Right cardiac atrium (tissue), 5 donors: ENCODE measurements at regions of chr2 and their contacts with region 1.

Region 1: GRCh38 chr2:209977386-209978239 is 24.8 kb upstream of the RPE start:
- DNase-seq: no peak
- ATAC-seq: no peak
- H3K4me3 ChIP-seq: no peak overlapping the region
- H3K27ac ChIP-seq: no peak overlapping the region
- H3K4me1 ChIP-seq: no peaks in the 10 kb centered on the region
- H3K27me3 ChIP-seq: peaks cover 3% of the 10 kb centered on the region

Region 2: DNA sequence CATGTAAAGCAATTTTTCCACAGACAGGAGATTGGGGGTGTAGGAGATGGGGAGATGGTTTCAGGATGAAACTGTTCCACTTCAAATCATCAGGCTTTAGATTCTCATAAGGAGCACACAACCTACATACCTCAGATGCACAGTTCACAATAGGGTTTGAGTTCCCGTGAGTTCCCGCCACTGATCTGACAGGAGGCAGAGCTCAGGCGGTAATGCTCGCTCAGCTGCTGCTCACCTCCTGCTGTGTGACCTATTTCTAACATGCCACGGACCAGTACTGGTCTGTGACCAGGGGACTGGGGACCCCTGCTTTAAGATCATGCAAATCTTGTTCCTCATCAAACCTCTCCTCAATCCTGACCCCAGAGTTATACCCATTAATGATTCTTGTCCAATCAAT is 94.9 kb after region 1 on chr2:
- intact Hi-C with region 1: no loop called
- DNase-seq: peak in 1 of 3 donors; percentile 31
- ATAC-seq: no peak
- H3K4me3 ChIP-seq: no peak overlapping the region
- H3K27ac ChIP-seq: no peak overlapping the region
- H3K4me1 ChIP-seq: no peaks in the 10 kb centered on the region
- H3K27me3 ChIP-seq: no peaks in the 10 kb centered on the region

Region 3: GRCh38 chr2:210195101-210195852 is 217.7 kb after region 1 on chr2:
- intact Hi-C with region 1: loop called (anchors 2 to 5 kb)
- DNase-seq: no peak
- ATAC-seq: no peak
- H3K4me3 ChIP-seq: peak overlapping the region; percentile 52
- H3K27ac ChIP-seq: no peak overlapping the region
- H3K4me1 ChIP-seq: no peaks in the 10 kb centered on the region
- H3K27me3 ChIP-seq: no peaks in the 10 kb centered on the region

Region 4: GRCh38 chr2:210203157-210203947 is 225.7 kb after region 1 on chr2:
- intact Hi-C with region 1: loop called in 3 of 4 experiments (anchors 2 to 5 kb)
- DNase-seq: no peak
- ATAC-seq: no peak
- H3K4me3 ChIP-seq: no peak overlapping the region
- H3K27ac ChIP-seq: no peak overlapping the region
- H3K4me1 ChIP-seq: no peaks in the 10 kb centered on the region
- H3K27me3 ChIP-seq: no peaks in the 10 kb centered on the region

Region 5: DNA sequence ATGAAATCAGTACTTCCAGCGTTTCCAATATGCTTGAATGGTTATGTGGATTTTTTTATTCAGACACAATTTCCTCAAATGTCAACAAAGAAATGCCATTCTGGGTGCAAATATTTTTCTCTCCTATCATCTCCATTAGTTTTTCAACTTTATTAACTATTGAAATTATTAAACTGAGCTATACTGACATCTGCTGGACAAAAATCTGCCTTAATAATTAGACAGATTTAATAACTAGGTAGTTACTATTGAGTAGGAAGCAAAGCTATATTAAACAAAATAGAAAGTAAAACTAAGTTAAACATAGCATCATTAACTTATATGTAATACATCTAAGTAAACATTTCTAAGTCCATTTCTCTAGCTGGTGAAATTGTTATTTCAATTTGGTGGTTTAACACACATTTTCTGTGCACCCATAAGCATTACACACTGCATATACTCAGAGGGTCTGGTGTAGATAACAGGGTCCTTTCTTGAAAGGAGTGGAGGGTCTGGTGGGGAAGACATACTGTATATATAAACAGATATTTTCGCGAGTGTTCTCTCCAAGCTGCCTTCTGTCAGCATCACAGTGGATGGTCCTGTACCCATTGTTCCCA is 421.9 kb after region 1 on chr2:
- intact Hi-C with region 1: loop called in 1 of 4 experiments (anchors 5 kb)
- DNase-seq: no peak
- ATAC-seq: no peak
- H3K4me3 ChIP-seq: no peak overlapping the region
- H3K27ac ChIP-seq: no peak overlapping the region
- H3K4me1 ChIP-seq: no peaks in the 10 kb centered on the region
- H3K27me3 ChIP-seq: no peaks in the 10 kb centered on the region